ENCODE measurements at regions of chr12 and their contacts with region 1.

Region 1: GRCh38 chr12:57590536-57591479 is at the start of gene PIP4K2C:
- DNase-seq: peak; percentile 87
- ATAC-seq: peak; percentile 98
- H3K4me3 Mint-ChIP-seq: peak within 1 kb of the TSS; percentile 82
- H3K27ac Mint-ChIP-seq: peak within 1 kb of the TSS; percentile 70
- H3K4me1 Mint-ChIP-seq: peaks cover 21% of the 10 kb centered on the region
- H3K27me3 Mint-ChIP-seq: no peaks in the 10 kb centered on the region
- total RNA-seq, gene PIP4K2C: 12.1 to 14.9 TPM

Region 2: GRCh38 chr12:57546438-57547383 is 44.1 kb before region 1 on chr12 and contains the start of gene DCTN2:
- CTCF ChIA-PET with region 1: interaction called, 8 read pairs
- POLR2A ChIA-PET with region 1: no interaction called
- intact Hi-C with region 1: loop called in 1 of 2 experiments (anchors 1 kb)
- DNase-seq: peak; percentile 97
- ATAC-seq: peak; percentile 98
- H3K4me3 Mint-ChIP-seq: peak within 1 kb of the TSS; percentile 99
- H3K27ac Mint-ChIP-seq: peak within 1 kb of the TSS; percentile 99
- H3K4me1 Mint-ChIP-seq: peaks cover 45% of the 10 kb centered on the region
- H3K27me3 Mint-ChIP-seq: peaks cover 13% of the 10 kb centered on the region
- total RNA-seq, gene DCTN2: 69.7 to 81.2 TPM

Region 3: DNA sequence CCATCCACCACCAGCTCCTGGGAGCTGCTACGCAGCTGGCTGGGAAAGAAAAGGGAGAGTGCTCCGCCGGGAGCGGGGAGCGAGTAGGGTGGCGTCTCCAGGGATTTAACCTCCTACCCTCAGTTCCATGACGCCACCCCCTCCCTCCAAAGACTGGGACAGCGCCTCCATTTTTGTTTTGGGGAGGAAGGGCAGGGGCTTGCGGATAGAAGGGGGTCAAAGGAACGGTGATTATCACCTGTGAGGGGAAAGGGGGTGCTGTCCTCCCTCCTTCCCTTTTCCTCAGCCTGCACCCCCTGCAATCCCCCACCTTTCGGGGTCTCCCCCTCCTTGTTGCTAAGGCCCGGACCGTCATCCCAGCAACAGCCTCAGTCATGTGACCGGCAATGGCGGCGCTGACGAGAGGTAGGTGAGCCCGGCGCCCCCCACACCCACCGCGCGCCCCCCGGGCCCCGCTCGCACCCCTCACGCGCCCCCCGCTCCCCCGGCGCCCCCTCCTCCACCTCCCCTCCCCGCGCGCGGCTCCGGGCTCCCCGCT is 13.7 kb after region 1 on chr12 and contains the start of gene DTX3:
- CTCF ChIA-PET with region 1: interaction called, 19 read pairs
- POLR2A ChIA-PET with region 1: interaction called, 3 read pairs
- intact Hi-C with region 1: loop called in 1 of 2 experiments (anchors 1 kb)
- DNase-seq: peak; percentile 71
- ATAC-seq: peak; percentile 68
- H3K4me3 Mint-ChIP-seq: peak within 1 kb of the TSS; percentile 71
- H3K27ac Mint-ChIP-seq: peak within 1 kb of the TSS; percentile 81
- H3K4me1 Mint-ChIP-seq: peaks cover 23% of the 10 kb centered on the region
- H3K27me3 Mint-ChIP-seq: no peaks in the 10 kb centered on the region
- total RNA-seq, gene DTX3: 16.7 to 17.0 TPM

Region 4: DNA sequence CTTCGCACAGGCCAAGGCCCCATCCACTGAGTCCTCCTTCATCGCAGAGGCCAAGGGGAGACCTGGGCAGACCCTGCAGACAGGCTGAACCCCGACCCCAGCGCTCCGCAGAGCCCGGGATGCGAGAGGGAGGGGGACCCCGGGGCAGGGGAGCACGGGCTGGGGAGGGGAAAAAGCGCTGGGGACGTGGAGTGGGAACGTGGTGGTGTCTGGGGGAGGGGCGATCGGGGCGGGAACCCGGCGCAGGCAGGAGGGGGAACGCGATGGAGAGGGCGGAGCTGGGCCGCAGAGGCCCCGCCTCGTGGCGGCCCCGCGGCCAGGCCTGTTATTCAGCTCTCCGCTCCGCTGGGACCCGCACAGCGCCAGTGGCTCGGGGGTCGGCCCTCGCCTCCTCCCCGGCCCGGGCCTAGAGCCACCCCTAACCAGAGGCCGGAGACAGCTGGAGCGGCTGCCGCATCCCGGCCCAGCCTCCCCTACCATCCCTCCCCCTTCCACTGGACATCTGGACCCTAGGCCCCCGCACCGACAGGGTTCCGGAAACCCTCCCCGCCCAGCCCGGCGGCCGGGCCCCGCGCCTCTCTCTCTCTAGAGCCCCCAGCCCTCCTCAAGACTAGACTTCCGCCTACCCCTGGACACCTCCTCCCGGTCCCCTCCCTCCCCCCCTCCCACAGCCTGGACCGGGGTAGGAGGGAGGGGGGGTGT is 20.5 kb after region 1 on chr12 and contains the start of gene ARHGEF25:
- CTCF ChIA-PET with region 1: interaction called, 3 read pairs
- POLR2A ChIA-PET with region 1: interaction called, 4 read pairs
- intact Hi-C with region 1: loop called in 1 of 2 experiments (anchors 1 kb)
- DNase-seq: peak; percentile 74
- ATAC-seq: peak; percentile 77
- H3K4me3 Mint-ChIP-seq: peak within 1 kb of the TSS; percentile 55
- H3K27ac Mint-ChIP-seq: no peak within 1 kb of the TSS
- H3K4me1 Mint-ChIP-seq: peaks cover 3% of the 10 kb centered on the region
- H3K27me3 Mint-ChIP-seq: peaks cover 13% of the 10 kb centered on the region
- total RNA-seq, gene ARHGEF25: 2.2 to 2.6 TPM

Region 5: DNA sequence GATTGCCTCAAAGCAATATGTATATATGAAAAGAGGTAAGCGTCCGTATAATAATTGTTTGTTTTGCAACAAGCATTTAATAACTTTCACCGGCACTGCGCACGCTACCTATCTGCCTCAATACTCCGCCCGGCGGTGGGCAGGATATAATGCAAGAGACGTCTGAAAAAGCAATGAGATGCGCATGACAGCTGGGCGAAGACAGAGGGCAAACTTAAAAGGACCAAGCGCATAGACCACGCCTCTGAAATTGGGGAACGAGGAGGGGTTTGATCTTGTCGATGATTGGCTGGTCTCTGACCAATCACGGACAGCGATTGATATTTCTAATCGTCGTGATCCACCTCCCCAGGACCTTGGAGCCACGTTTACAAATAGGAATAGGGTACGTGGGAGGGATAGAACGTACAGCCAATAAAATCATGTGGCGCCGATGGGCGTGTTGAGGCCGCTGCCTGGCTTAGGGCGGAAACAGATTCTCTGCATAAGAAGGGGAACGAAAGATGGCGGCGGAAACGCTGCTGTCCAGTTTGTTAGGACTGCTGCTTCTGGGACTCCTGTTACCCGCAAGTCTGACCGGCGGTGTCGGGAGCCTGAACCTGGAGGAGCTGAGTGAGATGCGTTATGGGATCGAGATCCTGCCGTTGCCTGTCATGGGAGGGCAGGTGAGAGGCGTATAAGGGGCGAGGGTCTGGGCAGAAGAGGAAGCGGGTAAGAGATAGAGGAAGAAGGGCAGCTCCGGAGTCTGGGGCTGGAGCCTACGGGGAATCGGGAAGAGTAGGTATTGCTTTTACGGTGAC is 103.1 kb after region 1 on chr12 and contains the start of gene OS9:
- CTCF ChIA-PET with region 1: no interaction called
- POLR2A ChIA-PET with region 1: no interaction called
- intact Hi-C with region 1: loop called in 1 of 2 experiments (anchors 1 kb)
- DNase-seq: peak; percentile 96
- ATAC-seq: peak; percentile 98
- H3K4me3 Mint-ChIP-seq: no peak within 1 kb of the TSS
- H3K27ac Mint-ChIP-seq: no peak within 1 kb of the TSS
- H3K4me1 Mint-ChIP-seq: peaks cover 4% of the 10 kb centered on the region
- H3K27me3 Mint-ChIP-seq: peaks cover 8% of the 10 kb centered on the region
- total RNA-seq, gene OS9: 61.7 to 63.2 TPM

Region 6: GRCh38 chr12:57793920-57794319 is 203.1 kb after region 1 on chr12:
- CTCF ChIA-PET with region 1: no interaction called
- POLR2A ChIA-PET with region 1: no interaction called
- intact Hi-C with region 1: no loop called
- DNase-seq: no peak
- ATAC-seq: peak; percentile 33
- H3K4me3 Mint-ChIP-seq: no peak overlapping the region
- H3K27ac Mint-ChIP-seq: peak overlapping the region; percentile 69
- H3K4me1 Mint-ChIP-seq: peaks cover 13% of the 10 kb centered on the region
- H3K27me3 Mint-ChIP-seq: no peaks in the 10 kb centered on the region

Region 7: DNA sequence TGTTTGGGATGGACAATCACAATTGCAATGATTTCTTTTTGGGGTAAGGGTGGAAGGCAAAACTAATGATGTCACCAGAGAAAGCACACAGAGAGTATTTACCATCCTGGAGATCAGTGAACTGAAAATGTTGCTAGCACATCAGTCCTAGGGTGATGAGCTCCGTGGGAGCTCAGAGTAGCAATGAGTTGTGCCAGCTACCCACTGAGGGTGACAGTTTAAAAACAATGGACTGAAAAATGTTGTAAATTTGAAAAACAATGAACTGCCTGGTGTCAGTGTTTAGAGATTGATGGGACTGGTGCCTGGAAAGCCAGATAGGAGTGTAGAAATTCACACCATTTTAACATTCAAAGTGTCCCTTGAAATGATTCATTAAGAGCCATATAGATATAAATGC is 549.1 kb after region 1 on chr12:
- CTCF ChIA-PET with region 1: no interaction called
- POLR2A ChIA-PET with region 1: no interaction called
- intact Hi-C with region 1: no loop called
- DNase-seq: no peak
- ATAC-seq: no peak
- H3K4me3 Mint-ChIP-seq: no peak overlapping the region
- H3K27ac Mint-ChIP-seq: no peak overlapping the region
- H3K4me1 Mint-ChIP-seq: no peaks in the 10 kb centered on the region
- H3K27me3 Mint-ChIP-seq: peaks cover 12% of the 10 kb centered on the region